ENCODE measurements at regions of chr1 and their contacts with region 1.

Region 1: DNA sequence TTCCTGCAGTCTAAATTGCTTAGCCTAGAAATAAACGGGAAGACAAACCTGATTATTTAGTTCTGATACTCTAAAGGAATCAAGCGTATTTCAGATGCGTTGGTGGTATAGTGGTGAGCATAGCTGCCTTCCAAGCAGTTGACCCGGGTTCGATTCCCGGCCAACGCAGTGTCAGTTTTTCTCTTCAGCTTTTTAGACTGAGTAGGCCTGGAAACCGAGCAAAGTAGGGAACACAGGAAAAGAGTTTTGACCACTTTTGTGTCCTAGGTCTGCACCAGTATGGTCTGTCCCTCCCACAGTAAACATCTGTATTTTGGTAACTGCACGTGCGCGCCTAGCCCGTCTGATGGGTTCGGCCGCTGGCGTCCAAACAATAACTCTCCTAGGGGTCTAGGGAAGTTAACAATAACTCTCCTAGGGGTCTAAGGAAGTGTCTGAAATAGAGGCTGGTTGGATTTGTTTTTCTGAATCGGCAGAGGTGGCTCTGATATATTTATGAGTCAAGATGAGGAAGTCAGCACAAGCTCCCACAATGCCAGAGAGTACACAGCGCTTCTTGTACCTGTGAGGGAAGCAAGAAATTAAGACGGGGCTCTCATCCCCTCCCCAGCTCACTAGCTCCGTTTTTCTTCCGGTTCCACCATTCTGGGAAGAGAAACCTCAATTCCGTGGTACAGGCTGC is 15.6 kb upstream of the HJV start:
- DNase-seq: peak; percentile 82
- ATAC-seq: peak; percentile 16
- H3K4me3 Mint-ChIP-seq: peak overlapping the region; percentile 100
- H3K27ac Mint-ChIP-seq: peak overlapping the region; percentile 78
- H3K4me1 Mint-ChIP-seq: peaks cover 10% of the 10 kb centered on the region
- H3K27me3 Mint-ChIP-seq: peaks cover 4% of the 10 kb centered on the region; the same call in 1 of the 2 replicates
- CTCF ChIP-seq: no peak

Region 2: GRCh38 chr1:145773423-145773822 is 263.7 kb before region 1 on chr1:
- CTCF ChIA-PET with region 1: no interaction called
- POLR2A ChIA-PET with region 1: no interaction called
- DNase-seq: no peak
- ATAC-seq: no peak
- H3K4me3 Mint-ChIP-seq: no peak overlapping the region
- H3K27ac Mint-ChIP-seq: peak overlapping the region; percentile 37; the same call in 1 of the 2 replicates
- H3K4me1 Mint-ChIP-seq: no peaks in the 10 kb centered on the region; the same call in 1 of the 2 replicates
- H3K27me3 Mint-ChIP-seq: no peaks in the 10 kb centered on the region
- CTCF ChIP-seq: no peak

Region 3: DNA sequence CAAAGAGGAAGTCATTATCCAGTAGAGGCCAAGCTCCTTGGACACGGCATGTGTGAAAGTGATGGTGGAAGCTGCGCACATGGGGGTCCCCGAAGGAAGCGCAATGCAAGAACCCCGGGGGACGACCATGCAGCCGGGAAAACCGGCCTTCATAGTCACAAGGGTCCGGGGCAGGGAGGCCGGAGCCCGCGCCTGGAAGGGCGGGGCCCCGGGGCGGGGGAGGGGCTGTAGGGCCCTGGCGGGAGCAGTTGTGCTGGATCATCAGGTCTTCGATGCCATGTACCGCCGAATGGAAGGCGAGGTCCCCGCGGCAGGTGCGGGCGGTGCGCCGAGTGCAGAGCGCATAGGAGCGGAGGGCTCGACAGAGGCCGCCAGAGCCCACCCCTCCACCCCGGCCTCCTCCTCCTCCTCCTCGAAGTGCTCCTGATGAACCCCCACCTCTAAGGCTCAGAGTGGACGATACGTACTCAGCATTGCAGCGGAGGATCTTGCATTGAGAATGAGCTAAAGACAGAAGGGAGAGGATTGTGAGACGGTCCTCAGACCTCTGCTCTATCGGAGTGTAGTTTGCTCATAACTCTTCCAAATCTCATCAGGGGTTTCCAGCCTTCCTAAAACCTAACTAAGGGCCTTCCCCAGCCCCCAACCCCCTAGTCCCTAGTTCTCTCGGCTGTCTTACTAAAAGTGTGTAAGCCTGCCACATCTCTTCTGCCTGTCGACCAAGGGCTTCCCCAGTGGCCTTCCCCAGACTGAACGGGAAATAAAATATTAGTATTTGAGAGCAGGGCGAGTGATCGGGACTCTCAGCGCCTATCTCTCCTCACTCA is 17.7 kb before region 1 on chr1:
- CTCF ChIA-PET with region 1: interaction called, 17 read pairs
- POLR2A ChIA-PET with region 1: interaction called, 8 read pairs
- DNase-seq: peak; percentile 72
- ATAC-seq: peak; percentile 95
- H3K4me3 Mint-ChIP-seq: peak overlapping the region; percentile 68
- H3K27ac Mint-ChIP-seq: no peak overlapping the region
- H3K4me1 Mint-ChIP-seq: peaks cover 15% of the 10 kb centered on the region
- H3K27me3 Mint-ChIP-seq: peaks cover 69% of the 10 kb centered on the region
- CTCF ChIP-seq: no peak

Region 4: DNA sequence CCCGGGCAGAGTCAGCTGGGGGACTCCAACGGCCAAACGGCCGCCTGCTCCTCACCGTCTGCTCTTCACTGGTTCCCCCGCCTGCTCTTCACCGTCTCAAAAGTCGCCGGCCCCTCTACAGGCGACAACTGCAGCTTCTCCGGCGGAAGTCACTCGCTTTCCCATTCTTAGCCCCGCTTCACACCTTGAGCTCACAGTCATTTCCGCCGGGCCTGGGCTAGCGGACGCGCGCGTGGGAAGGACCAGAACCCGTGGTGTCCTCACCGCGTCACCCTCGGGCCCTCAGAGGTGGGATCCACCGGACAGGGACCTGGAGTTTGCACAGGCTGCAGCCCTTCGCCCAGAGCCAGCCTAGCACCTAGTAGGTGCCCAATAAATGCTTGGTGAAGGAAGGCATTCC is 12.3 kb after region 1 on chr1:
- CTCF ChIA-PET with region 1: interaction called, 6 read pairs
- POLR2A ChIA-PET with region 1: interaction called, 62 read pairs
- DNase-seq: peak; percentile 38
- ATAC-seq: no peak
- H3K4me3 Mint-ChIP-seq: no peak overlapping the region
- H3K27ac Mint-ChIP-seq: peak overlapping the region; percentile 70; the same call in 1 of the 2 replicates
- H3K4me1 Mint-ChIP-seq: peaks cover 14% of the 10 kb centered on the region
- H3K27me3 Mint-ChIP-seq: no peaks in the 10 kb centered on the region
- CTCF ChIP-seq: no peak